Calu3 (cell line): ENCODE measurements at regions of chr19 and their contacts with region 1.

Region 1: DNA sequence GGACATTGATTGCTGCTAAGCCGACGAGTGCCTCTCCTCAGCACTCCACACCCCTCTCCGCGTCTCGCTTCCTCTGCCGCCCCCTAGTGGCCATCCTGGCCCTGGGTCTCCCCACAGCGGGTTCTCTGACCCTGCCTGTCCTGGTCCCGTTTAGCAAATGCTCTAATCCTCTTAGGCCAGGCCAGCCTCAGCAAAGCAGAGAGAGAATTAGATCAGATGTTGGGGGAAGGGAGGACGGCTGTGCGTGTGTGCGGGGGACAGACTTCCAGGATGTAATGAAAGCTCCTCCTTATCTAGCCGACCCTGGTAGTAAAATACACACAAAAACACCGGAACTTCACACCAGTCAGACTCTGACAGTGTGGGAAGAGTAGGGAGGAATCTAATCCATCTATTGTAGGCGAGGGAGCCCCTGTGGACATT is 4.5 kb downstream of the TPRX2 start:
- DNase-seq: peak; percentile 97
- H3K4me3 Mint-ChIP-seq: no peak overlapping the region
- H3K27ac Mint-ChIP-seq: no peak overlapping the region
- H3K4me1 Mint-ChIP-seq: peaks cover 13% of the 10 kb centered on the region
- H3K27me3 Mint-ChIP-seq: peaks cover 32% of the 10 kb centered on the region
- CTCF ChIP-seq: peak; percentile 96

Region 2: GRCh38 chr19:47813304-47814004 is 50.1 kb before region 1 on chr19:
- CTCF ChIA-PET with region 1: interaction called, 3 read pairs
- intact Hi-C with region 1: loop called (anchors 5 kb)
- DNase-seq: peak; percentile 92
- H3K4me3 Mint-ChIP-seq: no peak overlapping the region
- H3K27ac Mint-ChIP-seq: no peak overlapping the region
- H3K4me1 Mint-ChIP-seq: no peaks in the 10 kb centered on the region
- H3K27me3 Mint-ChIP-seq: peaks cover 9% of the 10 kb centered on the region
- CTCF ChIP-seq: peak; percentile 81

Region 3: GRCh38 chr19:47886010-47886559 is 22.6 kb after region 1 on chr19 and contains the start of gene SULT2A1:
- CTCF ChIA-PET with region 1: no interaction called
- intact Hi-C with region 1: no loop called
- DNase-seq: no peak
- H3K4me3 Mint-ChIP-seq: no peak within 1 kb of the TSS
- H3K27ac Mint-ChIP-seq: no peak within 1 kb of the TSS
- H3K4me1 Mint-ChIP-seq: peaks cover 11% of the 10 kb centered on the region
- H3K27me3 Mint-ChIP-seq: peaks cover 50% of the 10 kb centered on the region
- CTCF ChIP-seq: no peak
- total RNA-seq, gene SULT2A1: not detected in 2 replicates

Region 4: GRCh38 chr19:48340995-48341394 is 477.5 kb after region 1 on chr19:
- CTCF ChIA-PET with region 1: interaction called, 10 read pairs
- intact Hi-C with region 1: no loop called
- DNase-seq: no peak
- H3K4me3 Mint-ChIP-seq: no peak overlapping the region
- H3K27ac Mint-ChIP-seq: no peak overlapping the region
- H3K4me1 Mint-ChIP-seq: no peaks in the 10 kb centered on the region
- H3K27me3 Mint-ChIP-seq: no peaks in the 10 kb centered on the region
- CTCF ChIP-seq: no peak